AG04450 (cell line): ENCODE measurements at regions of chr16 and their contacts with region 1.

Region 1: GRCh38 chr16:27109666-27110523 is 43.2 kb downstream of the C16orf82 start:
- DNase-seq: peak; percentile 18
- H3K4me3 ChIP-seq: peak overlapping the region; percentile 59
- H3K27ac ChIP-seq: no peak overlapping the region
- H3K27me3 ChIP-seq: no peaks in the 10 kb centered on the region
- CTCF ChIP-seq: peak; percentile 78

Region 2: DNA sequence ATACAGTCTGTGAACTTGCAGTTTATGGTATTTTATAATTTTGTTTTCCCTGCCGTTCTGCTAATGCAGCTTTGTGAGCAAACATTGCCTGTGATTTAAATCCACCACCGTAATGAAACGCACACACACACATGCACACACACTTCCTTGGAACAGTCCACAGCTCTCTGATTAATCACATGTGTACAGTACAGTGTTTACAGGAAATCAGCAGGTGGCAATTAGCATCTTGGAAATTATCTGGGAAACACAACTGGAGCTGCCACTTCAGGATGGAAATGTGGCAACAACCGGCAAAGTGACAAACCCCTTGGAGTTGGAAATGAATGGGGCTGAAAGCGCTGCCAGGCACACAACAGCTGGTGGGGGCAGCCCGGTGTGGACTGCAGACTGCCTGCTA is 1839.3 kb before region 1 on chr16:
- CTCF ChIA-PET with region 1: interaction called, 10 read pairs
- POLR2A ChIA-PET with region 1: no interaction called
- DNase-seq: no peak
- H3K4me3 ChIP-seq: no peak overlapping the region
- H3K27ac ChIP-seq: no peak overlapping the region
- H3K27me3 ChIP-seq: no peaks in the 10 kb centered on the region
- CTCF ChIP-seq: no peak

Region 3: GRCh38 chr16:26169473-26169872 is 940.4 kb before region 1 on chr16:
- CTCF ChIA-PET with region 1: interaction called, 12 read pairs
- POLR2A ChIA-PET with region 1: no interaction called
- DNase-seq: no peak
- H3K4me3 ChIP-seq: no peak overlapping the region
- H3K27ac ChIP-seq: no peak overlapping the region
- H3K27me3 ChIP-seq: no peaks in the 10 kb centered on the region
- CTCF ChIP-seq: no peak

Region 4: DNA sequence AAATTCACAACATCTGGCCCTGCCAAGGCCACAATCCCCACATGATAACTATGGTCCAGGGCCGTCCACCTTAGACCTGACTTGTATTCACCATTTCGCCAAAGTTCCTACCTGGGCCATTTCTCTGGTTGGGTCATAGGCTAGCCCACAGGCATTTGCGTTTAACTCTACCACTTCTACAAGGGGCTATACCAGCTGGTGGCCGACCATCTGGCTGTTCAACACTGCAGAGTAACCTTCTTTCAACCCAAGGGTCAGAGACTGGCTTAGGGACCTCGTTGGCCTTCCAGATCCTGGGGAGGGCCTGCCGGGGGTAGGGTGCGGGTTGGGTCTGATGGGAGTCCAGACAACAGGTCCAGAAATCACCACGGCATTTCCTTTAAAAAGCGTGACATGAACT is 285.4 kb before region 1 on chr16:
- CTCF ChIA-PET with region 1: no interaction called
- POLR2A ChIA-PET with region 1: no interaction called
- DNase-seq: no peak
- H3K4me3 ChIP-seq: no peak overlapping the region
- H3K27ac ChIP-seq: no peak overlapping the region
- H3K27me3 ChIP-seq: peaks cover 8% of the 10 kb centered on the region
- CTCF ChIP-seq: no peak

Region 5: GRCh38 chr16:26930786-26931581 is 178.9 kb before region 1 on chr16:
- CTCF ChIA-PET with region 1: interaction called, 12 read pairs
- POLR2A ChIA-PET with region 1: no interaction called
- DNase-seq: no peak
- H3K4me3 ChIP-seq: no peak overlapping the region
- H3K27ac ChIP-seq: no peak overlapping the region
- H3K27me3 ChIP-seq: no peaks in the 10 kb centered on the region
- CTCF ChIP-seq: no peak

Region 6: DNA sequence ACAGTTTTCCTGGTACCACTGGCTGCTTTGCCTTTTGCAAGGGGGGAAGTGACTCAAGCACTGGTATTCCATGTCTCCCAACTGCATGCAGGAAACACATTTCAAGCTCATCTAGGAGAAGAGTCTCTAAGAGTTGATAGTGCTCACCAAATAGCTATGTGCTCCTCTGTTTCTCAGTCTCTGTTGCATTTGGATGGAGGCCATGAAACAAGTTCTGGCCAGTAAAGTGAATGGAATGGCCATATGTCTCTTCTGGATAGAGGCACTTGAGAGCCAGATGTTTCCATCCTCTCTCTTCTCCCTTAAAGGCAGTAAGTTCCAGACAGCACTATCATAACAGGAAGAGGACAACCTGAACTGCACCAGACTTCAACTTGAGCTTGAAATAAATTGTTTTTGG is 17.4 kb after region 1 on chr16:
- CTCF ChIA-PET with region 1: interaction called, 16 read pairs
- POLR2A ChIA-PET with region 1: no interaction called
- DNase-seq: peak; percentile 1
- H3K4me3 ChIP-seq: no peak overlapping the region
- H3K27ac ChIP-seq: no peak overlapping the region
- H3K27me3 ChIP-seq: no peaks in the 10 kb centered on the region
- CTCF ChIP-seq: no peak

Region 7: GRCh38 chr16:27367461-27368357 is 257.8 kb after region 1 on chr16:
- CTCF ChIA-PET with region 1: interaction called, 20 read pairs
- POLR2A ChIA-PET with region 1: no interaction called
- DNase-seq: peak; percentile 20
- H3K4me3 ChIP-seq: no peak overlapping the region
- H3K27ac ChIP-seq: peak overlapping the region; percentile 11
- H3K27me3 ChIP-seq: peaks cover 3% of the 10 kb centered on the region
- CTCF ChIP-seq: peak; percentile 81